Heart right ventricle (tissue), 16 donors: ENCODE measurements at regions of chr15 and their contacts with region 1.

Region 1: DNA sequence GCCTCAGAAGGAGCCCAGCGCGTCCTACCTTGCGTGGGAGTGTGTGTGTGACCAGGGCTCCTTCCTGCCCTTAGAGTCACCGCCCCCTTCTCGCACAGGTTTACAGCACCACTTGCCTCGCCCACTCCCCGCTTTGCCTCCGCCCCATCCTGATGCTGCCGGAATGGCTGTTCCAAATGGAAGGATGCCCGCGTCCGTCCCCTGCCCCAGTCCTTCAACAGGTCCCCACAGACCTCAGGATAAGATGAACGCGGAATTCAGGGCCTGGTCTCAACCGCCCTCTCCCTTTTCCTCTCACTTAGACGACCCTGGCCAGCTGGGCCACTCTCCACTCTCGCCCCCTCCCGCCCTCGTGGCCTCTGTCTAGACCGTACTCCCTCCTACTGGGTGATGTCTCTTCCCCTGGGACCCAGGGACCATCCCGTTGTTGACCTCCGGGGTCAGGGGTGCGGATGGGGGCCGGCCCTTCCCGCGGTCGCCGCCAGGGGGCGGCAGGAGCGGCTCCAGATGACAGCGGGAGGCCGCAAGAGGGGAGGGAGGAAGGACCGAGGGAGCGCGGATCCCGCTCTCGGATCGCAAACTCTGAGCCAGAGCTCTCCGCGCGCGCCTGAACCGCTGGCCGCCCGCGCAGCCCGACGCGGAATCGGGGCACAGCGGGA is at the start of gene THSD4:
- DNase-seq: peak; percentile 66 to 79
- ATAC-seq: peak; percentile 58 to 78 (median 70)
- H3K4me3 ChIP-seq: peak within 1 kb of the TSS; percentile 58 to 79 (median 66)
- H3K27ac ChIP-seq: peak within 1 kb of the TSS; percentile 73 to 96 (median 88)
- H3K4me1 ChIP-seq: peaks cover 0 to 37% (median 9%) of the 10 kb centered on the region in 9 donors
- H3K27me3 ChIP-seq: peaks cover 0 to 38% (median 0%) of the 10 kb centered on the region in 7 donors
- CTCF ChIP-seq: peak; percentile 86 to 98 (median 96)
- total RNA-seq, gene THSD4: 72.3 to 212 (median 170) TPM

Region 2: DNA sequence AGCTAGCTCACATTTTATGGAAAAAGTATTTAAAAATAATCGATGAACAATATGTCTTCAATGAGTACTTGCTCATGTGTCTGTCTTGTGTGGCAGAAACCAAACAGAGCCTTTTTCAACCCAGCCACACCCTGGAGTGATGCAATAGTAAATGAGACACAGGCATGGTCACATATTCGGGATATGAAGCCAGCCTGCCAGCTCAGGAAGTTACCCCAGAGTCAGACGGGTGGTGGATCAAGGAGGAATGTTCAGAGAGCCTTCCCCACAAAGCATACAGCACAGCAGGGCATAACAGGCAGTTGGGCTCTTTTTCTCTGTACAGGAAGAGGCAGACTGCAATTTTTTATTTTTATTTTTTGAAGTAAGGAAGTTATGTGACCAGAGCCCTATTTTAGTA is 288.4 kb before region 1 on chr15:
- intact Hi-C with region 1: loop called in 1 of 10 experiments (anchors 5 kb)
- DNase-seq: no peak
- ATAC-seq: peak in 4 of 8 donors; percentile 35 to 83 (median 56)
- H3K4me3 ChIP-seq: no peak overlapping the region
- H3K27ac ChIP-seq: peak overlapping the region in 1 of 10 donors; percentile 36
- H3K4me1 ChIP-seq: peaks cover 5 to 34% (median 19%) of the 10 kb centered on the region in 9 donors
- H3K27me3 ChIP-seq: no peaks in the 10 kb centered on the region
- CTCF ChIP-seq: no peak

Region 3: DNA sequence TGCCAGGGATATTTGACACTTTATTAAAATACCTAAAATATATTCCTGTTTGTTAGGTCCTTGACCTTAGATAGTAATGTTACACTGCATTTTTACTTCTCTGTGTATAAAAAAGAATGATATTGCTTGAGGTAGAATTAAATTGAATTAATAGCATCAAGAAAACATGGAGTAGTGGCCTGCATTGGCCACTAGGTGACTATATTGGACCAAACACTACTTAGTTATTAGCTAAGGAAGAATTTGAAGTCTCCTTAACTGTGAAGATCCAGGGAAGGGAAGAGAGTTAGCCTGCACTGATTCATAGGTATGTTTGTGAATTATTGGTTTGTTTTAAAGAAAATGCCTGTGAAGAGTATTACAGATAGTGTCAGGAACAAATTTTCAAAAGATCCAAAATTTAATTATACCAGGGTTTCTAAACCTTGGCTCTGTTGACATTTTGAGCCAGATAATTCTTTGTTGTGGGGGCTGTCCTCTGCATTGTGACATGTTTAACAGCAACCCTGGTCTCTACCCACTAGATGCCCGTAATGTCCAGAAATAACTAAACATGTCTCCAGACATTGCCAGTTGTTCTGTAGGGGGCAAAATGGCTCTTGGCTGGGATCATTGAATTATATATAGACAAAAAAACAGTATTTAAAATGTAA is 103.4 kb before region 1 on chr15:
- intact Hi-C with region 1: loop called in 2 of 10 experiments (anchors 10 kb)
- DNase-seq: no peak
- ATAC-seq: peak in 7 of 8 donors; percentile 71 to 84 (median 81)
- H3K4me3 ChIP-seq: peak overlapping the region in 5 of 10 donors; percentile 20 to 50 (median 48)
- H3K27ac ChIP-seq: peak overlapping the region in 2 of 10 donors; percentile 4 to 80
- H3K4me1 ChIP-seq: peaks cover 0 to 10% (median 3%) of the 10 kb centered on the region in 9 donors
- H3K27me3 ChIP-seq: no peaks in the 10 kb centered on the region
- CTCF ChIP-seq: peak; percentile 42 to 75 (median 70)

Region 4: GRCh38 chr15:71189718-71190117 is 74.7 kb after region 1 on chr15:
- intact Hi-C with region 1: loop called in 2 of 10 experiments (anchors 5 to 10 kb)
- DNase-seq: no peak
- ATAC-seq: no peak
- H3K4me3 ChIP-seq: no peak overlapping the region
- H3K27ac ChIP-seq: no peak overlapping the region
- H3K4me1 ChIP-seq: peaks cover 0 to 37% (median 13%) of the 10 kb centered on the region in 9 donors
- H3K27me3 ChIP-seq: no peaks in the 10 kb centered on the region
- CTCF ChIP-seq: no peak

Region 5: DNA sequence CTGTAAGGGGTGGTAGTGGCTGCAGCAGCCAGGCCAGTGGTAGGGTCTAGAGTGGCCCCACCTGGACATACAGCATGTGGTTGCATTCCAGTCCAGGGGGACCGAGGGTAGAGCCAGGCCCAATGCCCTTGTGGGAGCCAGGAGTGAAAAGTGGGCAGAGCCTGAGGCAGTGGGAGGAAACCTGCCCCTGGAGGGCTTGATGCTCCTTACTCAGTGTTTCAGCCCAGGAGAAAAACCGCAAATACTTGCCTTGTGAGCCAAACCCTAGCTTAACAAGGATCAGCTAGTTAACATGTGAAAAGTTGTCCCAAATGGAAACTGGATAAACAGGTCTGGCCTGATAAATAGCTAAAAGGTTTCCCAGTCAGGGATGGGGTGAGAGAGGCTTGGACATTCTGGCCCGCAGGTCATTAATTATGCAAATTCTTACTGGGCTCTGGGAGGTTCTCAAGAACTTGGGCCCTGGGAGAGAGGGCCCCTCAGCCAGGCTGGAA is 222.2 kb after region 1 on chr15:
- intact Hi-C with region 1: loop called in 4 of 10 experiments (anchors 5 to 10 kb)
- DNase-seq: no peak
- ATAC-seq: peak in 1 of 8 donors; percentile 51
- H3K4me3 ChIP-seq: no peak overlapping the region
- H3K27ac ChIP-seq: peak overlapping the region; percentile 28 to 94 (median 82)
- H3K4me1 ChIP-seq: peaks cover 0 to 37% (median 11%) of the 10 kb centered on the region in 9 donors
- H3K27me3 ChIP-seq: no peaks in the 10 kb centered on the region
- CTCF ChIP-seq: no peak

Region 6: DNA sequence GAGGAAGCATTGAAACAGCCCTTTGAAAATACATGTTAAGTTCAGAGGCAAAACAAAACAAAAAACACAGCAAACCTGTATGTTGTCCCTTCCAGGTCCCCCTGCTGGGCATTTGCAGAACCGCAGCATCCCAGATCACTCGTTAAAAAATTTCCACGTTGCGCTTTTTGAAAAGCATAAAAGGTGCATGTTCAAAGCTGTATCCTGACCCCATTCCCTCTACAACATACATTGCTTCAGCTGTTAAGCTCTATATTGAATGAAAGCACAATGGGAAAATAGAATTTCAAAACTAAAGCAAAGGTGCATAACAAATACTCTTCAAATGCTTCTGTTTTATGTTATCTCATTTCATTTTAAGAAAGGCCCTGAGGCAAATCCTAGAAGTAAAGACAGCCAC is 328.5 kb after region 1 on chr15:
- intact Hi-C with region 1: loop called (anchors 2 to 5 kb)
- DNase-seq: peak; percentile 40 to 61
- ATAC-seq: peak in 4 of 8 donors; percentile 25 to 47 (median 36)
- H3K4me3 ChIP-seq: no peak overlapping the region
- H3K27ac ChIP-seq: peak overlapping the region in 3 of 10 donors; percentile 28 to 52 (median 46)
- H3K4me1 ChIP-seq: peaks cover 3 to 40% (median 25%) of the 10 kb centered on the region in 9 donors
- H3K27me3 ChIP-seq: no peaks in the 10 kb centered on the region
- CTCF ChIP-seq: peak; percentile 76 to 90 (median 84)

Region 7: GRCh38 chr15:71575474-71576045 is 460.5 kb after region 1 on chr15:
- intact Hi-C with region 1: no loop called
- DNase-seq: no peak
- ATAC-seq: peak in 2 of 8 donors; percentile 29 to 36
- H3K4me3 ChIP-seq: no peak overlapping the region
- H3K27ac ChIP-seq: no peak overlapping the region
- H3K4me1 ChIP-seq: peaks cover 0 to 12% (median 0%) of the 10 kb centered on the region in 9 donors
- H3K27me3 ChIP-seq: no peaks in the 10 kb centered on the region
- CTCF ChIP-seq: peak; percentile 21 to 59 (median 48)